Naive thymus-derived CD8-positive, alpha-beta T cell (primary cell): ENCODE measurements at regions of chr16 and their contacts with region 1.

Region 1: DNA sequence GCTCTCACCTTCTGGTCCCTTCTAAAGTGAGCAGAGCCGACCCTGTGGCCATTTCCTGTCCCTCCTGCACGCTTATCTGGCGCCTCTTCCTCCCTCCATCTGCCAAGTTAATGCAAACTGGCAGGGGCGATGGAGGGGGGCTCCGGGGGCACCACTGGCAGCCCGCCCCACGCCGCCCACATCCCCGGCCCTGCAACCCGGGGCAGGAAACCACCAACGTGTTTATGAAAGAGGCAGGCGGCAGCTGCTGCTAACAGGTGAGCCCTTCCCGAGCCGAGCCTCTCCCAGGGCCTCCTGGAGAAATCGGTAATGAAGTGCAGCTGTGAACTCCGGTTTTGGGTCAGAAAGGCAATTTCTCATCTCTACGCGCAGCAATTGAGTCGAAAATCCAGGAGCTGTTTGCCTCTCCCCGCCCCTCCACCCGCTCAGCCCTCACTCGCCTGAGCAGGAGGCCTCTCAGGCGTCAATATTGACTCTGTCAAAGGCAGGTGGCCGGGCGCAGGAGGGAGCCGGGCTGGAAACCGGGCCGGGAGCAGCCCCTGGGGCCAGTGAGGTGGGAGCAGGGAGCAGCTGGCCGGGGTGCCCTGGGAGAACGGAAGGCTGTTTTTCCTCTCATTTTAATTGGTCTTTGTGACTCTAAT is 164.4 kb upstream of the GSE1 start:
- DNase-seq: peak; percentile 48 to 88 (median 73)
- ATAC-seq: peak; percentile 84 to 85
- H3K4me3 Mint-ChIP-seq: peak overlapping the region; percentile 73 to 86 (median 80)
- H3K27ac Mint-ChIP-seq: peak overlapping the region; percentile 86 to 98 (median 96)
- H3K4me1 Mint-ChIP-seq: peaks cover 28 to 77% (median 66%) of the 10 kb centered on the region in 4 donors
- H3K27me3 Mint-ChIP-seq: no peaks in the 10 kb centered on the region

Region 2: DNA sequence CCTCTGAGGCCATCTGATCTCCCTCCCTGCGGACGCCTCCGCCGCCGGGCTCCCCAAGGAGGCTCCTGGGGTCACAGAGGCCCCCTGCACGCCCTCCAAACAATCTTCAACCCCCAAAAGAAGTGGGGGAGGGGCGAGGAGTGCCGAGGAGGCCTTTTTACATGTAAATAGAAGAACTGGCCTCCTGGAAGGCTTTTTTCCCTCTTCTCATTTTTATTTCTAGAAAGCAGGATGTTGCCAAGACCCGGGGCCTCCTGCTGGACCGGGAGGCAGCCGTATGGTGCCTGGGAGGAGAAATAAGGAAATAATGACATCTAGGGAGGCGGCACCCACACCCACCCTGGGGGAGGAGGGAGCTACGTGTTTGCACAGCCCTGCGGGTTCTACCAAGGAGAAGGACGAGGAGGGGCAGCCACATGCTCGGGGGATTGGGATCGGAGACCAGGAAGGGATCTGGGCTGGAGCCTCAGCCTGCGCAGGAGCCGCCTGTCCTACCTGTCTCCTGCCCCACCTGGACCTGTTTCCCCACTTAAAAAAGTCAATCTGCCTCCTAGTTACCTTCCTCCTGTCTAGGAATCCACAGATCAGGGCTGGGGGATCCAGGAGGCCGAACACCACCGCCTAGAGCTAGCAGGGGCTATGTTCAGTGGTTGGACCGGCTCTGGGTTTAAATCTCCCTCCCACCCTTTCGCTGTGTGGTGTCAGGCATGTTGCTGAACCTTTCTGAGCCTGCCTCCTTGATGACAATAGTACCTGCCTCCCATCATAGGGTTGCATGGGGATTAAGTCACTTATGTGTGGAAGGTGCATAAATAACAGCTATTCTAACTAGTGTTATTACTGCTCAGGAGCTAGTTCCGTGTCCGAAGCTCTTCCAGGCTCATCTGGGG is 11.3 kb before region 1 on chr16:
- POLR2A ChIA-PET with region 1: interaction called, 18 read pairs
- DNase-seq: no peak
- ATAC-seq: no peak
- H3K4me3 Mint-ChIP-seq: peak overlapping the region in 1 of 10 donors; percentile 34
- H3K27ac Mint-ChIP-seq: peak overlapping the region in 1 of 10 donors; percentile 57
- H3K4me1 Mint-ChIP-seq: peaks cover 0 to 10% (median 8%) of the 10 kb centered on the region in 4 donors
- H3K27me3 Mint-ChIP-seq: no peaks in the 10 kb centered on the region

Region 3: GRCh38 chr16:85461814-85462713 is 13.4 kb after region 1 on chr16:
- POLR2A ChIA-PET with region 1: interaction called, 74 read pairs
- DNase-seq: peak in 6 of 10 donors; percentile 8 to 43 (median 32)
- ATAC-seq: peak; percentile 77 to 80
- H3K4me3 Mint-ChIP-seq: peak overlapping the region; percentile 83 to 95 (median 88)
- H3K27ac Mint-ChIP-seq: peak overlapping the region in 6 of 10 donors; percentile 44 to 89 (median 76)
- H3K4me1 Mint-ChIP-seq: peaks cover 5 to 21% (median 13%) of the 10 kb centered on the region in 4 donors
- H3K27me3 Mint-ChIP-seq: peaks cover 2 to 12% (median 10%) of the 10 kb centered on the region in 5 donors

Region 4: GRCh38 chr16:85610508-85611332 is 162.0 kb after region 1 on chr16:
- POLR2A ChIA-PET with region 1: interaction called, 87 read pairs
- DNase-seq: peak; percentile 76 to 93 (median 88)
- ATAC-seq: peak; percentile 56 to 68
- H3K4me3 Mint-ChIP-seq: peak overlapping the region; percentile 74 to 92 (median 84)
- H3K27ac Mint-ChIP-seq: peak overlapping the region; percentile 47 to 87 (median 80)
- H3K4me1 Mint-ChIP-seq: peaks cover 11 to 57% (median 41%) of the 10 kb centered on the region in 4 donors
- H3K27me3 Mint-ChIP-seq: no peaks in the 10 kb centered on the region